Activated CD8-positive, alpha-beta T cell treated with anti-CD3 and anti-CD28 coated beads, Interleukin-2, amount 10 ng/mL, durations not matched to agents 7 days and 5 days (primary cell): ENCODE measurements at regions of chr20 and their contacts with region 1.

Region 1: DNA sequence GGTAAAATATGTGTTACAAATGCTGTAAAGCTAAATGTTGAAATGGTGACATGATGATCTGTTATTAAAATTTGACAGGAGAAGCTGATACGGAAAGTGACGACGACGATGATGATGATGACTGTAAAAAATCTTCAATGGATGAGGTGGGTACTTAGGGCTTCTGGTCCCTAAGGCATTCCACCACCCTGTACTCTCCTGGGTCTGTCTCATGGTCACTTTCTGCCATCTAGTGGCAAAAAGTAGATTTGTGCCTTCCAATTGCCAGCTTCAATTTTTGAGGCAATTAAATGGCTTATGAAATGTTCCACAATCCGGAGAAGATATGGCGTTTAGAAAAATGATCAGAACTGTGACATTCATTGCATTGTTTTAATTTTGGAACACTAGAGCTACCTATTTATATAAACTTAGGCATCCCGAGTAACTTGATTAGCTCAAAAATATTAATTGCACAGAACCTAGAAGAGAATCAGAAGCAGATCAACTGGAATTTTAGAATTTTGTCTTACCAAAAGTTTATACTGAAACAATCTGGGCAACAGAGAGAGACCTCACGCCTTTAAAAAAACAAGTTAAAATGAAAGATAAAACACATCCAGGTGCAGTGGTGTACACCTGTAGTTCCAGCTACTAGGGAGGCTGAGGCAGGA is 346.5 kb upstream of the PLCB4 start:
- DNase-seq: peak; percentile 44
- ATAC-seq: no peak
- H3K4me3 Mint-ChIP-seq: no peak overlapping the region
- H3K27ac Mint-ChIP-seq: no peak overlapping the region
- H3K4me1 Mint-ChIP-seq: no peaks in the 10 kb centered on the region
- H3K27me3 Mint-ChIP-seq: no peaks in the 10 kb centered on the region

Region 2: GRCh38 chr20:7935027-7935551 is 787.3 kb before region 1 on chr20:
- CTCF ChIA-PET with region 1: interaction called, 82 read pairs
- POLR2A ChIA-PET with region 1: no interaction called
- DNase-seq: no peak
- ATAC-seq: no peak
- H3K4me3 Mint-ChIP-seq: no peak overlapping the region
- H3K27ac Mint-ChIP-seq: no peak overlapping the region
- H3K4me1 Mint-ChIP-seq: no peaks in the 10 kb centered on the region
- H3K27me3 Mint-ChIP-seq: no peaks in the 10 kb centered on the region

Region 3: GRCh38 chr20:8043687-8044282 is 678.6 kb before region 1 on chr20:
- CTCF ChIA-PET with region 1: interaction called, 82 read pairs
- POLR2A ChIA-PET with region 1: no interaction called
- DNase-seq: peak; percentile 49
- ATAC-seq: peak; percentile 79
- H3K4me3 Mint-ChIP-seq: no peak overlapping the region
- H3K27ac Mint-ChIP-seq: no peak overlapping the region
- H3K4me1 Mint-ChIP-seq: peaks cover 1% of the 10 kb centered on the region
- H3K27me3 Mint-ChIP-seq: peaks cover 23% of the 10 kb centered on the region

Region 4: DNA sequence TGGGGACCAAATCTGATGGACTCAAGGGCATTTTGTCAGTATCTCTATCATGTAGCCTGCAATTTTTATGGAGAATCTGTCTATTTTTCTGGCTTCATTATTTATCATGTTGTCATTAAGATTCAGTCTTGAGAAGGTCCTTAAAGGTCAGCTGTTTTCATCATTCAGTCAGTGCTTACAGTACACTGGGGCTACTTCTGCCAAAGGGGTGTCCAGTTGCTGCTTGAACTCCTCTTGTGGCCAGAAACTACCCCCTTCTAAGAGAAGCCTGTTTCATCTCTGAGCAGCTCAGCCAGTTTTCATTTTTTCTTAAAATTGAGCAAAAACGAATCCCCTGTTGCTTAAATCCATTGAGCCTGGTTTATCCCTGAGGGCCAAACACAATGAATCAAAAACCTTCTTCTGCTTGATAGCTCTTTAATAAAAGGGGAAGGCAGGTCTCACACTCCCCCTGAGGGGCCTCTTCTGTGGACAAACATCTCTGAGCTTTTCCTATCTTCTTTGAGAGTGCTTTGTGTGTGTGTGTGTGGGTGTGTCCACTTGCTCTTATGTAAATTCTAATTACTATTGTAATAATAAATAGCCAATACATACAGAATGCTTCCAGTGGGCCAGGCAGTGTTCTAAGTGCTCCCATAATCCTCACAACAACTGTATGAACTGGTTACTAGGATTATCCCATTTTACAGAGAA is 418.1 kb before region 1 on chr20:
- CTCF ChIA-PET with region 1: interaction called, 10 read pairs
- POLR2A ChIA-PET with region 1: no interaction called
- DNase-seq: no peak
- ATAC-seq: no peak
- H3K4me3 Mint-ChIP-seq: no peak overlapping the region
- H3K27ac Mint-ChIP-seq: no peak overlapping the region
- H3K4me1 Mint-ChIP-seq: peaks cover 6% of the 10 kb centered on the region
- H3K27me3 Mint-ChIP-seq: no peaks in the 10 kb centered on the region

Region 5: DNA sequence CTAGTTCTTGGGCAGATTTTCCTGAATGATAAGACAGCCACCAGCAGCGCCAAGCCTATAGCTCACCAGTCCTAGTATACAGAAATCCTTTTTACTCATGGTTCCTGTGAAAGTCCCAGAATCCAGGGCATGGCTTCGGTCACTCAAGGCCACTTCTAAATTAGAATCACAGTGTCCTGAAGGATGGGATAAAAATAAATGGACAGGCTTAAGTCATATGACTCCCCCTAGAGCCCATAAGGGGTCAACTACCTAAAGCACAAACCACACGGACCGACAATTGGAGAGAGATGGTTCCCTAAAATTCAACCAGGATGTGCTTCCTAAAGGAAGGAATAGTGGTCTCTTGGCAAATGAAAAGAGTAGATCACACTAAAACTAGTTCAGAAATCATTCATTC is 57.6 kb before region 1 on chr20:
- CTCF ChIA-PET with region 1: interaction called, 10 read pairs
- POLR2A ChIA-PET with region 1: no interaction called
- DNase-seq: no peak
- ATAC-seq: no peak
- H3K4me3 Mint-ChIP-seq: no peak overlapping the region
- H3K27ac Mint-ChIP-seq: no peak overlapping the region
- H3K4me1 Mint-ChIP-seq: no peaks in the 10 kb centered on the region
- H3K27me3 Mint-ChIP-seq: no peaks in the 10 kb centered on the region

Region 6: GRCh38 chr20:8735674-8736073 is 13.3 kb after region 1 on chr20:
- CTCF ChIA-PET with region 1: interaction called, 26 read pairs
- POLR2A ChIA-PET with region 1: no interaction called
- DNase-seq: no peak
- ATAC-seq: no peak
- H3K4me3 Mint-ChIP-seq: no peak overlapping the region
- H3K27ac Mint-ChIP-seq: no peak overlapping the region
- H3K4me1 Mint-ChIP-seq: no peaks in the 10 kb centered on the region
- H3K27me3 Mint-ChIP-seq: no peaks in the 10 kb centered on the region

Region 7: DNA sequence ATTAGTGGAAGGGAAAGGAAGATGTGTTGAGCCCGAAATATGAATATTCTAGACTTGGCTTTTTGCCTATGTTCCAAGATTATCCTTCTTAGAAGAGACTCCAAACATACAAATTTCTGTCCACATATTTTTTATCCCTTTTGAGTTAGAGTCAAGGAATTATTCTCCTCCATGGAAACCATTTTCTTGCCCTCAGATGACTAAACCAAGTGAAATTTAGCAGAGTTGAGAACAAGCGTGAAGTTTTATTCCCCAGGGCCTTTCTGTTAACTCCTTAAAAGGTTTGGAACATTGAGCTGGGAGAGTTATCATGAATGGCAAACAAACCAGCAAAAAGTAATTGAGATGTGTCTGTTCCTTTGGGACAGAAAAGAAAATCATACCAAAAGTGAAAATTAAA is 60.4 kb after region 1 on chr20:
- CTCF ChIA-PET with region 1: no interaction called
- POLR2A ChIA-PET with region 1: no interaction called
- DNase-seq: no peak
- ATAC-seq: no peak
- H3K4me3 Mint-ChIP-seq: no peak overlapping the region
- H3K27ac Mint-ChIP-seq: no peak overlapping the region
- H3K4me1 Mint-ChIP-seq: no peaks in the 10 kb centered on the region
- H3K27me3 Mint-ChIP-seq: no peaks in the 10 kb centered on the region